Activated T-helper 1 cell treated with anti-CD3 and anti-CD28 coated beads, Interleukin-12 subunit alpha, Interleukin-12 subunit beta, Interleukin-2, Interleukin-4 antibody, amounts not matched to agents 30 ng/mL and 10 ng/mL and 1 ng/mL, durations not matched to agents 14 hours and 24 hours and 36 hours (primary cell): ENCODE measurements at regions of chr11 and their contacts with region 1.

Region 1: DNA sequence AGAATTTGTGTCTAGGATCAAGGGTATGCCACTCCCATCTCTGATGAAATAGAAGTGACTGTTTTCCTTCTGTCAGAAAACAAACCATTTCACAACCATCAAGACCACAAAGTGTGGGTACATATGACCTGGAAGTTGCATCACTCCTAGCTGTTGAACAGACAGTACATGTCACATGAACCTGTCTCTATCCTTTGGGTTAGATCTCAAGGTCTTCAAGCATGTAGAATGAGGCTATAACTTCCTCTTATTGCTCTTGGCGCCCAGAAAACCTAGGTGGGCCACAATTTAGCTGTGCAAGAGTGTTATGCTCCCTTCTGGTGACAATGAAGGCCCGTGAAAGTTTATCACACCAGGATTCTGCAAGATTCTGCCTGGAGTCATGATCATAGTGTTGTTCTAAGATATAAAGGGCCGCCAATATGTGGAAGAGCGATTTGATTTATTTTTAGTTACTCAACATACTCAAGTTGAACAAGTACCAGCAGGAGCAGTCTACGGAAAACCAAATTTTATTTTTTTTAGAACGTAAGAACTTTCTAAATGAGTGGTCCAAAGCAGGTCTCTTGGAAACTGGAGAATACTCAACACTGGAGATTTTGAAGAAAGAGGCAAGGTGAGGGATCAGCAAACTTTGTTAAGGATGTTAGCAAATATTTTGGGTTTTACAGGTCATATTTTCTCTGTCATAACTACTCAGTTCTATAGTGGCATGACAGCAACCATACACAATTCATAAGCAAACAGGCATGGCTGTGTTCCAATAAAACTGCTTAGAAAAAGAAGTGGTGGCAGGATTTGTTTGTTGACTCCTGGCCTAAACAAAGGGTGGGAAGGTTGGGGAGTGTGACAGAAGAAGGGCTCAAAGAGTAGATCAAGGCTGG is 101.8 kb downstream of the USP35 start:
- DNase-seq: peak; percentile 54
- H3K4me3 Mint-ChIP-seq: peak overlapping the region; percentile 73
- H3K27ac Mint-ChIP-seq: peak overlapping the region; percentile 92
- H3K4me1 Mint-ChIP-seq: peaks cover 68% of the 10 kb centered on the region
- H3K27me3 Mint-ChIP-seq: no peaks in the 10 kb centered on the region

Region 2: GRCh38 chr11:78228467-78228866 is 62.1 kb before region 1 on chr11:
- intact Hi-C with region 1: loop called (anchors 2 kb)
- DNase-seq: peak; percentile 21
- H3K4me3 Mint-ChIP-seq: no peak overlapping the region
- H3K27ac Mint-ChIP-seq: no peak overlapping the region
- H3K4me1 Mint-ChIP-seq: peaks cover 75% of the 10 kb centered on the region
- H3K27me3 Mint-ChIP-seq: no peaks in the 10 kb centered on the region

Region 3: DNA sequence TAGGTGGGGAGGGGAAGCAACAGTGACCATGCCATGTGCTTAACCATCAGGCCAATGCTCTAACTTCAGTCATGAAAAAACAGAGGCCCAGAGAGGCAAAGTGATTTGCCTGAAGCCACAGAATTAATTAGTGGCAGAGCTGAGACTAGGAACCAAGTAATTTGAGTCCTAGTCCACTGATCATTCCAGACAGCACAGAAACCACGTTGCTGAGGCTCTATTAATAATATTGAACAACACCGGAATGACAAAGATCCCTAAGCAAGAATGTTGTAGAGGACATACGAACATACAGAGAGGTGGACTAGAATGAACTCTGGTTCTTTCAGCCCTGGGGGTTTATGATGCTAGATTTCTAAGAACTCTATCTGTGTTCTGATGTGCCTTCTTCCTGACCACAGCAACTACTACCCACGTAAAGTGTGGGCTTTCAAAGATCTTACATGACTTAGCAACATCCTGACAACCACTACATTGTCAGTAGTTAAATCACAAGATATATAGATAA is 34.8 kb after region 1 on chr11:
- intact Hi-C with region 1: loop called (anchors 1 kb)
- DNase-seq: peak; percentile 28
- H3K4me3 Mint-ChIP-seq: peak overlapping the region; percentile 56
- H3K27ac Mint-ChIP-seq: peak overlapping the region; percentile 86
- H3K4me1 Mint-ChIP-seq: peaks cover 78% of the 10 kb centered on the region
- H3K27me3 Mint-ChIP-seq: no peaks in the 10 kb centered on the region

Region 4: DNA sequence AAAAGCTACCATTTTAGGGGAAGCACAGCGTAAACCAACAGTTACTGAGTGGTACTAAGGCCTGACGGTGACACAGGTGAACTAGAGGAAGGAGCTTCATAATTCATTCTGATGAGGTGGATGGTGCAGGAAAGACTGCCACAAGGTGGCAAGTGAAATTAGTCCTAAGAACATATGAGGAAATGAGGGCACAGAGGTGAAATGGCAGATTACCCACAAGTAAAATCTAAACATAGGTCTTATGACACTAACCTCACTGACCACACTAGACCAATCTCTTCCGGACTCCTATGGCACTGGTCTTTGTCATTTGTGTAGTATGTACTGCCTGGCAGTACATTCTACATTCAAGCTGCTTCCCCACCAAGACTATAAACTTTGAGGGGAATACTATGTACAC is 106.9 kb after region 1 on chr11:
- intact Hi-C with region 1: loop called (anchors 5 kb)
- DNase-seq: no peak
- H3K4me3 Mint-ChIP-seq: no peak overlapping the region
- H3K27ac Mint-ChIP-seq: peak overlapping the region; percentile 4
- H3K4me1 Mint-ChIP-seq: peaks cover 54% of the 10 kb centered on the region
- H3K27me3 Mint-ChIP-seq: no peaks in the 10 kb centered on the region